ENCODE measurements at regions of chr16 and their contacts with region 1.

Region 1: GRCh38 chr16:1651094-1651973 is 26.7 kb upstream of the JPT2 start:
- DNase-seq: no peak
- ATAC-seq: no peak
- H3K4me3 ChIP-seq: no peak overlapping the region
- H3K4me3 Mint-ChIP-seq: no peak overlapping the region
- H3K27ac ChIP-seq: no peak overlapping the region
- H3K27ac Mint-ChIP-seq: peak overlapping the region in 1 of 2 donors; percentile 28
- H3K4me1 ChIP-seq: no peaks in the 10 kb centered on the region
- H3K4me1 Mint-ChIP-seq: peaks cover 5 to 16% (median 10%) of the 10 kb centered on the region in 3 donors
- H3K27me3 ChIP-seq: no peaks in the 10 kb centered on the region
- H3K27me3 Mint-ChIP-seq: no peaks in the 10 kb centered on the region

Region 2: GRCh38 chr16:1435921-1436697 is 215.2 kb before region 1 on chr16:
- CTCF ChIA-PET with region 1: no interaction called
- POLR2A ChIA-PET with region 1: no interaction called
- DNase-seq: no peak
- ATAC-seq: no peak
- H3K4me3 ChIP-seq: no peak overlapping the region
- H3K4me3 Mint-ChIP-seq: no peak overlapping the region
- H3K27ac ChIP-seq: no peak overlapping the region
- H3K27ac Mint-ChIP-seq: no peak overlapping the region
- H3K4me1 ChIP-seq: peaks cover 0 to 23% of the 10 kb centered on the region in 2 experiments
- H3K4me1 Mint-ChIP-seq: no peaks in the 10 kb centered on the region
- H3K27me3 ChIP-seq: peaks cover 0 to 8% of the 10 kb centered on the region in 2 experiments
- H3K27me3 Mint-ChIP-seq: no peaks in the 10 kb centered on the region

Region 3: GRCh38 chr16:1564325-1564724 is 87.0 kb before region 1 on chr16:
- CTCF ChIA-PET with region 1: no interaction called
- POLR2A ChIA-PET with region 1: no interaction called
- DNase-seq: peak in 1 of 35 experiments; percentile 23
- ATAC-seq: no peak
- H3K4me3 ChIP-seq: no peak overlapping the region
- H3K4me3 Mint-ChIP-seq: no peak overlapping the region
- H3K27ac ChIP-seq: no peak overlapping the region
- H3K27ac Mint-ChIP-seq: no peak overlapping the region
- H3K4me1 ChIP-seq: peaks cover 8 to 36% of the 10 kb centered on the region in 2 experiments
- H3K4me1 Mint-ChIP-seq: peaks cover 30 to 43% (median 34%) of the 10 kb centered on the region in 3 donors
- H3K27me3 ChIP-seq: no peaks in the 10 kb centered on the region
- H3K27me3 Mint-ChIP-seq: no peaks in the 10 kb centered on the region

Region 4: DNA sequence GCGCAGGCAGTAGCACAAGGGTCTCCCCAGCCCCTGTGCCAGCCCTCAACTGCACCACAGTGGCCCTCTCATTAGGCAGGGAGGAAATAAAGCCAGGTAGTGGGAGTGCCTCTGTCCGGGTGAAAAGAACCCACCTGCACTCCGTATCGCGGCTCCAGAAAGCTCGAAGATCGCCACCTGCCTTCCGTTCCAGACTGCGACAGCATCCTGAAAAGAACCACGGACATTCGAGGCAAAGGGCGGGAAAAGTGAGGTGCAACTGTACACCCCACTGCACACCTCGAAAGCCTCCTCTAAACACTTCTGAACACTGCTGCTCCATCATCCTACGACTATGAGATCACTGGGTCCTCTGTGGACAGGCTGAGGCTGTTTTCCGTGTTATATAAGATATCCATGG is 68.2 kb before region 1 on chr16:
- CTCF ChIA-PET with region 1: no interaction called
- POLR2A ChIA-PET with region 1: interaction called in 1 of 2 experiments, 10 read pairs
- DNase-seq: no peak
- ATAC-seq: no peak
- H3K4me3 ChIP-seq: no peak overlapping the region
- H3K4me3 Mint-ChIP-seq: no peak overlapping the region
- H3K27ac ChIP-seq: no peak overlapping the region
- H3K27ac Mint-ChIP-seq: no peak overlapping the region
- H3K4me1 ChIP-seq: no peaks in the 10 kb centered on the region
- H3K4me1 Mint-ChIP-seq: peaks cover 0 to 1% (median 0%) of the 10 kb centered on the region in 3 donors
- H3K27me3 ChIP-seq: no peaks in the 10 kb centered on the region
- H3K27me3 Mint-ChIP-seq: no peaks in the 10 kb centered on the region